ENCODE measurements at regions of chr10 and their contacts with region 1.

Region 1: DNA sequence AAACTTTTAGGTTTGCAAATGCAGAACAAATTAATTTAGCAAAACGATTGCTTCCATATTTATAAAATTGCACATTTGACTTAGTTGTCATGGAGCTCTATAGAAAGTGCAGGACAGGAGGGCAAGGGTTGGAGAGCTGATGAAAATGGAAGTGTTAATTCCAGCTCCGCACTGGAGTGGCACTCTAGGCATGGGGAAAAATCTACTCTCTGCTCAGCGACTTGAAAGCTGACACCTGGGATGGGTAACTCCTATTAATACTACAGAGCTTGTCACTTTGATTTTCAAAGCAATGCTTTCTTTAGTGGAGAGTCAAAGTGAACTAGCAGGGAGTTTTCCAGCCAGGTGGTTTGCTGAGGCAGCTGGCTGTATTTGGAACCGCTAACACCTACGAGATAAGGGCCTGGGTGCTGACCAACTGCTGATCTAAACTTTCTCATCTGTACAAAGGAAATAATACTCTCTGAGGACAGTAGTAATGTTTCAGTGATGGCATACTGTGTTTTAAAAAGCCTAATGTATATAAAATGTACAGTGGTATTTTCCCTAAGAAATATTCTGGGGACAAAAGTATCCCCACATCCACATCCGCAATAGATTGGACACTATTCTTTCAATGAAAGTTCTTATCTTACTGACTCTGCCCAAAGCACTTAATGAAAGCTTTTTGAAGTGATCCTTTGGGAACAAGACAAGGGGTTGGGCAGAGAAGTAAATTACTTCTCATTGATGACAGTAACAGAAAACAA is 444.3 kb downstream of the GPAM start:
- DNase-seq: no peak
- H3K4me3 ChIP-seq: no peak overlapping the region
- H3K27ac ChIP-seq: no peak overlapping the region
- H3K4me1 ChIP-seq: no peaks in the 10 kb centered on the region
- H3K27me3 ChIP-seq: no peaks in the 10 kb centered on the region
- CTCF ChIP-seq: no peak
- POLR2A ChIP-seq: no peak

Region 2: DNA sequence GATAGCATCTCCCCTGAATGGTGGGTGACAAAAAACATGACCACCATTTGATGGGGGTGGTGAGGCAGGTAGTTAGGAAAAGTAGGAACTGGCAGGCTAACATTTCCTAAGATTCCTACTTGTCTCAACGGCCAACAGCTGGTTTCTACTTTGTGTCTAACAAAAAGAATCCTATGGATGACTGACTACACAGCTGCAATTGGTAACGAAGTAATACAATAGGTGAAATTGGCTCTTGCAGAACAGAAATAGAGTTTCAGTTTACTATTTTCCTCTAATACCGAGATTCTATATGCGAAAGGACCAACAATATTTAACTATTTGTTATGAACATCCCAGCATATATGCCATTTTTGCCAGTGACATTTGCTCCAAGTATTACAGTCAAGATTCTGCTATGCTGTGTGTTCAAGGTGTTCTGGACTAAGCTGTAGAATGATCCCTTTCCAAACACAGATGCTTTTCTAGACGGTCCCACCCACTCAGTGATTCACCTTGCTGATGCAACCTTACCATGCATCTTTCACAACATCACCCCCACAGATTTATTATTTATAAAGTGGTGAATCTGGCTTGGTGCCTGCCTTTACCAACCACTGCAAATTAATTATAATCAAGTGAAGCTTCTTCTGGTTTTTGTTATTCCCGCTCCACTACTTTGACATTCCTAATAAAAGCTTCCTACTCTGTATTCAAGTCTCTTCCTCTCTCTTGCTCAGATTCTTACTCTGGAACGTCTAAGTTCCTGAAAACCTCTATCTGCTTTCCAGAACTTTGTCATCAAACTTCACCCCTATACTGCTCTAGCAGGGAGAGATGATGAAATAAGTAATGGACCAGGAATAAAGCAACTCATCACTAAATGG is 837.1 kb before region 1 on chr10:
- intact Hi-C with region 1: no loop called
- DNase-seq: no peak
- H3K4me3 ChIP-seq: no peak overlapping the region
- H3K27ac ChIP-seq: peak overlapping the region in 3 of 4 donors; percentile 40 to 52 (median 46)
- H3K4me1 ChIP-seq: peaks cover 6 to 29% (median 8%) of the 10 kb centered on the region in 3 donors
- H3K27me3 ChIP-seq: no peaks in the 10 kb centered on the region
- CTCF ChIP-seq: no peak
- POLR2A ChIP-seq: no peak

Region 3: DNA sequence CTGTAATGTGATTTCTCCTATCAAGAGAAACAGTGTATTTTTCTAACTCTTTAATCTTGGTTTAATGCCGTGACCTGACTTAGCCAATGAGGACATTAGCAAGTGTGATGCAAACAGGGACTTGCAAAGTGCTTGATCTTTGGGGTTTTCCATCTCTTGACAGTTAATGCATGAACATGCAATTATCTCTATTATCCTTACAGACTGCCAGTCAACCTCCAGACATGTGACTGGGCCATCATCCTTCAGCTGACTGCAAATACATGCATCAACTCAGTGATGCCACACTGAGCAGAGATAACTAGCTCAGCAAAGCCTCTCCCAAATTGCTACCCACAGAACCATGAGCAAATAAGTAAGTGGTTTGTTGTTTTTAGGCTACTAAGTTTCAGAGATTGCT is 34.7 kb after region 1 on chr10:
- intact Hi-C with region 1: loop called (anchors 2 kb)
- DNase-seq: no peak
- H3K4me3 ChIP-seq: no peak overlapping the region
- H3K27ac ChIP-seq: no peak overlapping the region
- H3K4me1 ChIP-seq: no peaks in the 10 kb centered on the region
- H3K27me3 ChIP-seq: no peaks in the 10 kb centered on the region
- CTCF ChIP-seq: no peak
- POLR2A ChIP-seq: no peak

Measured in esophagus squamous epithelium (tissue), 5 donors.